Activated naive CD4-positive, alpha-beta T cell treated with anti-CD3 and anti-CD28 coated beads for 36 hours (primary cell): ENCODE measurements at regions of chr21 and their contacts with region 1.

Region 1: DNA sequence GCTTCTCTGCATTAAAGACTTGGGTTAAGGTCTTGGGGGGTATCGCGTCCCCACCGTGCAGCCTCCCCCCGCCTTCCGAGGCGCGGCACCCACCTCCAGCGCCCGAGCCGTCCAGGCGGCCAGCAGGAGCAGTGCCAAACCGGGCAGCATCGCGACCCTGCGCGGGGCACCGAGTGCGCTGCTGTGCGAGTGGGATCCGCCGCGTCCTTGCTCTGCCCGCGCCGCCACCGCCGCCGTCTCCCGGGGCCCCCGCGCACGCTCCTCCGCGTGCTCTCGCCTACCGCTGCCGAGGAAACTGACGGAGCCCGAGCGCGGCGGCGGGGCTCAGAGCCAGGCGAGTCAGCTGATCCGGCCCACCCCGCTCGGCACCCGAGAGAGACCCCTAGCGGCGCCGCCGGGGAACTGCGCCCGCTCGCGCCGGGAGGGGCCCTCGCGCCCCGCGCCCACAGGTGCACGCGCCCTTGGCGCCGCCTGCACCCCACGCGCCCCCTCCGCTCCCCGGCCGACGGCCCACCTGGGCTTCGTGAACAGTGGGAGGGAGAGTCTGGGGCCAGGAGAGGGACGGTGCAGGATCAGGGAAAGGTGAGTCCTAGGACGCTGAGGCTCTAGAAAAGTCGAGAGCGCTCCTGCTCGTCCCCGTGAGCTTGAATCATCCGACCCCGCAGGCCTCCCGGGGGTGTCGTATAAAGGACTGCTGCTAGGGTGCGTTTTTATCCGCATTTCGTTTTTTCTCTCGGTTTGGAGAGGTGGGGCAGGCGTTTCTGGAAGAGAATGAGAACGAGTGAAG is at the start of gene APP:
- DNase-seq: peak; percentile 87
- H3K4me3 Mint-ChIP-seq: peak within 1 kb of the TSS; percentile 90
- H3K27ac Mint-ChIP-seq: peak within 1 kb of the TSS; percentile 66
- H3K4me1 Mint-ChIP-seq: peaks cover 21% of the 10 kb centered on the region
- H3K27me3 Mint-ChIP-seq: no peaks in the 10 kb centered on the region
- total RNA-seq, gene APP: 60.6 to 61.1 TPM

Region 2: GRCh38 chr21:25507522-25507921 is 663.1 kb before region 1 on chr21:
- CTCF ChIA-PET with region 1: no interaction called
- intact Hi-C with region 1: loop called (anchors 5 kb)
- DNase-seq: peak; percentile 55
- H3K4me3 Mint-ChIP-seq: no peak overlapping the region
- H3K27ac Mint-ChIP-seq: peak overlapping the region; percentile 70
- H3K4me1 Mint-ChIP-seq: peaks cover 75% of the 10 kb centered on the region
- H3K27me3 Mint-ChIP-seq: no peaks in the 10 kb centered on the region

Region 3: GRCh38 chr21:25881525-25882376 is 288.9 kb before region 1 on chr21:
- CTCF ChIA-PET with region 1: interaction called, 5 read pairs
- intact Hi-C with region 1: loop called (anchors 1 kb)
- DNase-seq: peak; percentile 74
- H3K4me3 Mint-ChIP-seq: no peak overlapping the region
- H3K27ac Mint-ChIP-seq: no peak overlapping the region
- H3K4me1 Mint-ChIP-seq: no peaks in the 10 kb centered on the region
- H3K27me3 Mint-ChIP-seq: no peaks in the 10 kb centered on the region

Region 4: GRCh38 chr21:25953659-25954058 is 217.0 kb before region 1 on chr21:
- CTCF ChIA-PET with region 1: no interaction called
- intact Hi-C with region 1: no loop called
- DNase-seq: no peak
- H3K4me3 Mint-ChIP-seq: no peak overlapping the region
- H3K27ac Mint-ChIP-seq: no peak overlapping the region
- H3K4me1 Mint-ChIP-seq: no peaks in the 10 kb centered on the region
- H3K27me3 Mint-ChIP-seq: no peaks in the 10 kb centered on the region

Region 5: DNA sequence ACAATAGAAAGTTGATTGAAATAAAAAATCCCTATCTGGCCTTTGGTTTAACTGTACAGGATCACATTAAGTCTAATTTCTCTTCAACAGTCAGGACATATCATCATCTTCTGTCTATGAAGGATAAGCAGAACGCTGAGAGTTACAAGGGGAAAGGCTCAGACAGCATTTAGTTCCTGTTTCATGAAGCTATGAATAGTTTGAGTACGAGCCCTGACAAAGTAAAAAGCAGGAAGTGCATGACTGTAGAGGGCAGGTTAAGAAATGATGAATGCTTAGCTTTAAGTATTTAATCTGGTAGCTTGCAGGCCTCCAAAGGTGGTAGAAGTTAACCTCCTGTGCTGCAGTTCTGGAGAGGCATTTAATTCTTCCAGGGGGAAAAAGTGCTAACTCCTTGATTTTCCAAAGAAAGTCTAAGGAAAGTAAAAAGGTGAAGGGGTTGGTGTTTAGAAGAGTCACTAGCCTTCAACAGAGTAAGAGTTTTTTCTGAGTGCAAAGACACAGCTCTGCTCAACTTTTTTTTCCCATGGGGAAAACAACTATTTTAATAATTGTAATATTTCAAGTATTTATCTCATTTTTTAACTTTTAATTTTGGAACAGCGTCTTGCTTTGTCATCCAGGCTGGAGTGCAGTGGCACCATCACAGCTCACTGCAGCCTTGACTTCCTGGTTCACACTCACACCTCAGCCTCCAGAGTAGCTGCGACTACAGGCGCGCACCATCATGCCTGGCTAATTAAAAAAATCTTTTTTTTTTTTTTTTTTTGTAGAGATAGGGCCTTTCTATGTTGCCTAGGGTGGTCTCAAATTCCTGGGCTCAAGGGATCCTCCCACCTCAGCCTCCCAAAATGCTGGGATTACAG is 202.9 kb before region 1 on chr21:
- CTCF ChIA-PET with region 1: no interaction called
- intact Hi-C with region 1: loop called (anchors 5 kb)
- DNase-seq: peak; percentile 16
- H3K4me3 Mint-ChIP-seq: no peak overlapping the region
- H3K27ac Mint-ChIP-seq: peak overlapping the region; percentile 58
- H3K4me1 Mint-ChIP-seq: peaks cover 9% of the 10 kb centered on the region
- H3K27me3 Mint-ChIP-seq: no peaks in the 10 kb centered on the region

Region 6: GRCh38 chr21:26070822-26071425 is 99.7 kb before region 1 on chr21:
- CTCF ChIA-PET with region 1: no interaction called
- intact Hi-C with region 1: loop called (anchors 1 kb)
- DNase-seq: peak; percentile 52
- H3K4me3 Mint-ChIP-seq: peak overlapping the region; percentile 69
- H3K27ac Mint-ChIP-seq: peak overlapping the region; percentile 70
- H3K4me1 Mint-ChIP-seq: peaks cover 52% of the 10 kb centered on the region
- H3K27me3 Mint-ChIP-seq: no peaks in the 10 kb centered on the region

Region 7: GRCh38 chr21:26715878-26716506 is 545.3 kb after region 1 on chr21:
- CTCF ChIA-PET with region 1: no interaction called
- intact Hi-C with region 1: loop called (anchors 2 kb)
- DNase-seq: peak; percentile 30
- H3K4me3 Mint-ChIP-seq: no peak overlapping the region
- H3K27ac Mint-ChIP-seq: no peak overlapping the region
- H3K4me1 Mint-ChIP-seq: no peaks in the 10 kb centered on the region
- H3K27me3 Mint-ChIP-seq: peaks cover 10% of the 10 kb centered on the region